CD14-positive monocyte (primary cell): ENCODE measurements at regions of chr10 and their contacts with region 1.

Region 1: DNA sequence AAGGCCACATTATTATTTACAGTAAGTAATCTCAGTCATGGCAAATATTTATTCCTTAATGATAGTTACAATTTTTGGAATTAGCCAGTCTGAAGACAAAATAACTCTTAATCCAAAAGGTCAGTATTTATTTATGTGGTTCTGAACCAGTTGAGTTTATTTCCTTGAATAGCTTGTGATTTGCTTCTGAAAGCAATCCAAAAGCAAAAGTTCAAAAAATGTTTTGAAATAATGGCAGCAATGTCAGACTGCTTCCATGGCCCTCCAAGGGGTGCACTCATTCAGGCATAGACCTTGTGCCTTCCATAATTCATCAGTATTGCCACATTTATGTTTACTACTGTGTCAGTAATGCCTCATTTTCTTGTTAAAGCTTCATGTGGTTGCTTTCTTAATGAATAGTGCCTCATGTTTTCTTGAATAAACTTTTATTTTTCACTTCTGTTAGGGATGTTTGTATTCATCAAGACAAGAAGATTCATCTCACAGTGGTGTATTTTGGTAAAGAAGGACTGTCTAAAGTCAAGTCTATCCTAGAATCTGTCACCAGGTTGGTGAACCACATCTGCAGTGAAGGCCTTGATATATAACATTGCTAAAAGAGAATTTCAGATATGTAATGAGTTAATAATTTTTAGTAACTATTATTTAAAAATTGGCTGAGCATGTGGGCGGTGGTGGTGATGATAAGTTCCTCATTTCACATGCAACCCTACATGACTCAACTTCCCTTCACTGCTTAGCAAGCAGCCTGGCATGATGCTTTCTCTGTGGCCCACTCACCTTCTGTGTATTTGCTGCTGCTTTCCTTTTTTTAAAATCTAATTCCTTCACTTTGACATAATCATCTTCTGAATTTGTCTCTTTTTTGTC is 22.0 kb downstream of the CSGALNACT2 start:
- DNase-seq: peak; percentile 84 to 91 (median 91)
- H3K4me3 ChIP-seq: peak overlapping the region in 1 of 3 experiments; percentile 44
- H3K4me3 Mint-ChIP-seq: peak overlapping the region; percentile 28 to 79
- H3K27ac ChIP-seq: peak overlapping the region; percentile 59 to 86
- H3K27ac Mint-ChIP-seq: peak overlapping the region; percentile 91 to 100 (median 98)
- H3K4me1 ChIP-seq: peaks cover 28 to 56% of the 10 kb centered on the region in 2 donors
- H3K4me1 Mint-ChIP-seq: peaks cover 50% of the 10 kb centered on the region
- H3K27me3 ChIP-seq: no peaks in the 10 kb centered on the region
- H3K27me3 Mint-ChIP-seq: peaks cover 0 to 2% (median 1%) of the 10 kb centered on the region in 3 donors
- CTCF ChIP-seq: no peak

Region 2: GRCh38 chr10:43120929-43121314 is 39.4 kb before region 1 on chr10:
- intact Hi-C with region 1: loop called (anchors 5 kb)
- DNase-seq: peak; percentile 95 to 98 (median 97)
- H3K4me3 ChIP-seq: peak overlapping the region in 1 of 3 experiments; percentile 39
- H3K4me3 Mint-ChIP-seq: peak overlapping the region; percentile 57 to 68
- H3K27ac ChIP-seq: peak overlapping the region; percentile 74 to 94
- H3K27ac Mint-ChIP-seq: peak overlapping the region; percentile 94 to 98 (median 98)
- H3K4me1 ChIP-seq: peaks cover 55 to 64% of the 10 kb centered on the region in 2 donors
- H3K4me1 Mint-ChIP-seq: peaks cover 61% of the 10 kb centered on the region
- H3K27me3 ChIP-seq: no peaks in the 10 kb centered on the region
- H3K27me3 Mint-ChIP-seq: peaks cover 1 to 6% (median 2%) of the 10 kb centered on the region in 3 donors
- CTCF ChIP-seq: no peak

Region 3: GRCh38 chr10:43132867-43133787 is 27.2 kb before region 1 on chr10:
- intact Hi-C with region 1: no loop called
- DNase-seq: peak in 1 of 3 donors; percentile 3
- H3K4me3 ChIP-seq: no peak overlapping the region
- H3K4me3 Mint-ChIP-seq: peak overlapping the region in 1 of 2 donors; percentile 24
- H3K27ac ChIP-seq: peak overlapping the region in 1 of 2 donors; percentile 31
- H3K27ac Mint-ChIP-seq: peak overlapping the region in 6 of 7 donors; percentile 38 to 89 (median 74)
- H3K4me1 ChIP-seq: peaks cover 56 to 84% of the 10 kb centered on the region in 2 donors
- H3K4me1 Mint-ChIP-seq: peaks cover 76% of the 10 kb centered on the region
- H3K27me3 ChIP-seq: no peaks in the 10 kb centered on the region
- H3K27me3 Mint-ChIP-seq: peaks cover 2 to 4% (median 3%) of the 10 kb centered on the region in 3 donors
- CTCF ChIP-seq: no peak